ENCODE measurements at regions of chrX and their contacts with region 1.

Region 1: GRCh38 chrX:69469975-69470374 is 34.2 kb upstream of the NALF2 start:
- DNase-seq: no peak
- H3K4me3 ChIP-seq: no peak overlapping the region
- H3K27ac ChIP-seq: no peak overlapping the region
- H3K4me1 ChIP-seq: no peaks in the 10 kb centered on the region
- H3K27me3 ChIP-seq: peaks cover 0 to 79% of the 10 kb centered on the region in 2 donors
- CTCF ChIP-seq: no peak
- POLR2A ChIP-seq: no peak

Region 2: DNA sequence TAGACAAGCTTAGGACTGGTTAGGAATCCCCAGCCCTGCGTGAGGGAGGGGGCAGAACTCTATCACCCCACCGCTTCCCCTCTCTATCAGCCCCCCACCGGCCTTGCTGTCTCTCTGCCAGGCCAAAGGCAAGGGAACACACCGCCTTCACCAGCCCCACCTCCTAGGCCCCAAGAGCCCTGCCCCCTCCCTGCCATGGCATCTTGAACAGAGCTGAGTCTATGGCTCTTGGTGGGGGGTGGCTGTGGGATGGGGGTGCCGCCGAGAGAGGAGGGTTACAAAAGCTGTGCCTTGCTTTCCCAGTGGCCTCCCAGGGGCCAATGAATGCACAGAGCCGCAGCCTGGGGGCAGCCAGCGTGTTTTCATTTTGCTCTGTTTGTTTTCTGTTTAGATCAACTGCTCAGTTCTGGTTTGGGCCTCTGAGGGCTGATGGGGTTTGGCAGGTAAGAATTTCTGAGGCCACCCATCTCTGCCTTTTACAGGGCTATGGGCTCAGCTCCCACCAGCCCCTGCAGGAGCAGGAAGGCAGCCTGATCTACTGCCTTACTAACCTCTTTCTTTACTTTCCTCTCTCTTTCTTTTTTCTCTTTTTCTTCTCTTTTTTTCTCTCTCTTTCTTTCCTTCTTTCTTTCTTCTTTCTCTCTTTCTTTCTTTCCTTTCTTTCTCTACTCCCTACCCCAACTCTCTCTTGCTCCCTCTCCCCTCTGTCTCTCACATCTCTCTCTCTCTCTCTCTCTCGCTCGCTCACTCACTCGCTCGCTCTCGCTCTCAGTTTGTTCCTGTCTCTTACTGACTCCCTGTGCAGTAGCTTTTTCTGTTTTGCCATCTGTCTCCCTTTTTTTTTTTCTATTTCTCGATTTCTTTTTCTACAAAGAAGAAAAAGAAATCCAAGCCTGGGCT is 433.1 kb before region 1 on chrX:
- intact Hi-C with region 1: no loop called
- DNase-seq: no peak
- H3K4me3 ChIP-seq: no peak overlapping the region
- H3K27ac ChIP-seq: no peak overlapping the region
- H3K4me1 ChIP-seq: no peaks in the 10 kb centered on the region
- H3K27me3 ChIP-seq: peaks cover 0 to 32% of the 10 kb centered on the region in 2 donors
- CTCF ChIP-seq: no peak
- POLR2A ChIP-seq: no peak

Region 3: GRCh38 chrX:69457756-69458155 is 12.2 kb before region 1 on chrX:
- intact Hi-C with region 1: no loop called
- DNase-seq: no peak
- H3K4me3 ChIP-seq: no peak overlapping the region
- H3K27ac ChIP-seq: no peak overlapping the region
- H3K4me1 ChIP-seq: no peaks in the 10 kb centered on the region
- H3K27me3 ChIP-seq: no peaks in the 10 kb centered on the region
- CTCF ChIP-seq: no peak
- POLR2A ChIP-seq: no peak

Region 4: GRCh38 chrX:69510137-69510715 is 40.3 kb after region 1 on chrX:
- intact Hi-C with region 1: loop called (anchors 5 kb)
- DNase-seq: no peak
- H3K4me3 ChIP-seq: no peak overlapping the region
- H3K27ac ChIP-seq: no peak overlapping the region
- H3K4me1 ChIP-seq: peaks cover 0 to 3% of the 10 kb centered on the region in 2 donors
- H3K27me3 ChIP-seq: peaks cover 0 to 78% of the 10 kb centered on the region in 2 donors
- CTCF ChIP-seq: no peak
- POLR2A ChIP-seq: no peak

Measured in breast epithelium (tissue), 4 donors.